Left ventricle myocardium inferior (tissue), 1 donor: ENCODE measurements at regions of chr5 and their contacts with region 1.

Region 1: DNA sequence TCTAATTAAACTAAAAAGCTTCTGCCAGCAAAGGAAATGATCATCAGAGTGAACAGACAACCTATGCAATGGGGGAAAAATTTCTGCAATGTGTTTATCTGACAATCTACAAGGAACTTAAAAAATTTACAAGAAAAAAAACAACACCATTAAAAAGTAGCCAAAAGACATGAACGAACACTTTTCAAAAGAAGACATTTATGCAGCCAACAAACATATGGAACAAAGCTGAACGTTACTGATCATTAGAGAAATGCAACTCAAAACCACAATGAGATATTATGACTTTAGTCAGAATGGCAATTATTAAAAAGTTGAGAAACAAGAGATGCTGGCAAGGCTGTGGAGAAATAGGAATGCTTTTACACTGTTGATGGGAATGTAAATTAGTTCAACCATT is 530.4 kb upstream of the DAB2 start:
- DNase-seq: no peak
- H3K4me3 ChIP-seq: no peak overlapping the region
- H3K27ac ChIP-seq: no peak overlapping the region
- H3K4me1 ChIP-seq: no peaks in the 10 kb centered on the region
- H3K27me3 ChIP-seq: no peaks in the 10 kb centered on the region
- CTCF ChIP-seq: no peak

Region 2: GRCh38 chr5:39815711-39816110 is 139.4 kb before region 1 on chr5:
- intact Hi-C with region 1: no loop called
- DNase-seq: no peak
- H3K4me3 ChIP-seq: no peak overlapping the region
- H3K27ac ChIP-seq: no peak overlapping the region
- H3K4me1 ChIP-seq: no peaks in the 10 kb centered on the region
- H3K27me3 ChIP-seq: no peaks in the 10 kb centered on the region
- CTCF ChIP-seq: no peak

Region 3: DNA sequence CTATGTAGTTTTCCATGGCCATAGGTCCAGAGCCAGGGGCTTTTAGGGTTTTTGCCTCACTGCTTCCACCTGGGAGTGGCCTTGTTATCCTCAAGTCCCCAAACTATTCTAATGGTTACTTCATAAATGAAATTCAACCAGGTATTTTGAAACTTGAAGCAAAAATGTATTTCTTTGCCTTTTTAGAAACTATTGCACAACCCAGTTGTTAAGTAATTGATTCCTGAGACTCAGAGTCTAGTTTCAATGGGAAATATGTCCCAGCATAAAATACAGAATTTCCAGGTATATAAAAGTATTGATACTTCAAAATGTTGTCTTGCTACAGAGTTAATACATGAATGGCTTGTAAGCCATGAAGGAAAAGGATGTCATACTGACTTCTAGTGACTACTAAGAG is 74.2 kb before region 1 on chr5:
- intact Hi-C with region 1: no loop called
- DNase-seq: no peak
- H3K4me3 ChIP-seq: no peak overlapping the region
- H3K27ac ChIP-seq: no peak overlapping the region
- H3K4me1 ChIP-seq: no peaks in the 10 kb centered on the region
- H3K27me3 ChIP-seq: no peaks in the 10 kb centered on the region
- CTCF ChIP-seq: no peak

Region 4: GRCh38 chr5:39892708-39893107 is 62.4 kb before region 1 on chr5:
- intact Hi-C with region 1: no loop called
- DNase-seq: no peak
- H3K4me3 ChIP-seq: no peak overlapping the region
- H3K27ac ChIP-seq: no peak overlapping the region
- H3K4me1 ChIP-seq: no peaks in the 10 kb centered on the region
- H3K27me3 ChIP-seq: no peaks in the 10 kb centered on the region
- CTCF ChIP-seq: no peak

Region 5: DNA sequence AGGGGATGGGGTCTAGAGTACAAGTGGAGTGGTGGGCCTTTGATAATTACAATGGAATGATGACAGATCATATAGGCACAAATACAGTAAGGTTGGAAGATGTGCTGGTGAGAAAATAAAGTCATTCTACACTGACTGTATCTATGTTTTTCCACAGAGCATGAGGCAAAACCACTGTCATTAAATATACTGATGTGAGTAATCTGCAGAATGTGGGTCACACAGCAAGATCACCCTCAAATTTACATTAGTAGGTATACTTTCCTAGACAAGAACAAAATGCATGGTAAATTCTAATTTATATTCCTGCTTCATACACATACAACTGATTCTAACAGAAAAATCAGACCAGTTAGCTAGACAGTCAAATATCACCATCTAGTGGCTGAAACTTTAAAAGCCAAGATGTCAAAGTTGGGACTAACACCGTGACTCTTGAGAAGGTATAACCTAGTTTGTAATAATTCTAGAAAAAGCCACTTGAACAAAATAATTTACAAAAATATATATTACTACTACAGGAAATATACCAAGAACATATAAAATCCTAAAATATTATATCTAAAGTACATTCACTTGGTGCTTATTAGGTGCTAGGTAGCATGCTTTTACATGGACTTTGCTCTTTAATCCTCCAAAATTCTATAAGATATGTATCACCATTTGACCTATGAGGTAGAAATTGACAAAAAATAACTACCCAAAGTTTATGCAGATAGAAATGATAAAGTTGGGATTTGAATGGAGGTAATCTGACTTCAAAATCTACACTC is 781.1 kb after region 1 on chr5:
- intact Hi-C with region 1: loop called (anchors 10 kb)
- DNase-seq: no peak
- H3K4me3 ChIP-seq: no peak overlapping the region
- H3K27ac ChIP-seq: no peak overlapping the region
- H3K4me1 ChIP-seq: peaks cover 30% of the 10 kb centered on the region
- H3K27me3 ChIP-seq: no peaks in the 10 kb centered on the region
- CTCF ChIP-seq: peak; percentile 89